GM12878 (cell line): ENCODE measurements at regions of chr3 and their contacts with region 1.

Region 1: DNA sequence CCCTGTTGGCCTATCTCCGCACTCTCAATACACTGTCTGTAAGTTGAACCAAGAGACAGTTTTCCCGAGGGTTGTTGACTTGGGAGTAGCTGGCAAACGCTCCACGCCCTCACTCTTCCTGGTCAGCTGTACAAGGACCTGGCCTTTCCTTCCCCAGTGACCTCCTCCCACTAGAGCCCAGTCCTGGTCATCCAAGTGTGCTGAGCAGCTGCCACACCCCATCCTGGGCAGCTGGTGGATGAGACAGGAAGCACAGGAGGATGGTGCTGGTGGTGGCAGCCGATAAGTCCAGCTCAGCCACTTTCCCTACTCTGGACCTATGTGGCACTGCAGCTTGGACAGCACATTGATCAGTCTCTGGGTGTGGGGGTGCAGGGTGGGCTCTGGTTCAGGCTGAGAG is 19.8 kb downstream of the PFKFB4 start:
- DNase-seq: no peak
- ATAC-seq: no peak
- H3K4me3 ChIP-seq: no peak overlapping the region
- H3K27ac ChIP-seq: no peak overlapping the region
- H3K4me1 ChIP-seq: no peaks in the 10 kb centered on the region
- H3K27me3 ChIP-seq: no peaks in the 10 kb centered on the region
- CTCF ChIP-seq: no peak
- EP300 ChIP-seq: no peak
- POLR2A ChIP-seq: no peak
- RAD21 ChIP-seq: no peak

Region 2: DNA sequence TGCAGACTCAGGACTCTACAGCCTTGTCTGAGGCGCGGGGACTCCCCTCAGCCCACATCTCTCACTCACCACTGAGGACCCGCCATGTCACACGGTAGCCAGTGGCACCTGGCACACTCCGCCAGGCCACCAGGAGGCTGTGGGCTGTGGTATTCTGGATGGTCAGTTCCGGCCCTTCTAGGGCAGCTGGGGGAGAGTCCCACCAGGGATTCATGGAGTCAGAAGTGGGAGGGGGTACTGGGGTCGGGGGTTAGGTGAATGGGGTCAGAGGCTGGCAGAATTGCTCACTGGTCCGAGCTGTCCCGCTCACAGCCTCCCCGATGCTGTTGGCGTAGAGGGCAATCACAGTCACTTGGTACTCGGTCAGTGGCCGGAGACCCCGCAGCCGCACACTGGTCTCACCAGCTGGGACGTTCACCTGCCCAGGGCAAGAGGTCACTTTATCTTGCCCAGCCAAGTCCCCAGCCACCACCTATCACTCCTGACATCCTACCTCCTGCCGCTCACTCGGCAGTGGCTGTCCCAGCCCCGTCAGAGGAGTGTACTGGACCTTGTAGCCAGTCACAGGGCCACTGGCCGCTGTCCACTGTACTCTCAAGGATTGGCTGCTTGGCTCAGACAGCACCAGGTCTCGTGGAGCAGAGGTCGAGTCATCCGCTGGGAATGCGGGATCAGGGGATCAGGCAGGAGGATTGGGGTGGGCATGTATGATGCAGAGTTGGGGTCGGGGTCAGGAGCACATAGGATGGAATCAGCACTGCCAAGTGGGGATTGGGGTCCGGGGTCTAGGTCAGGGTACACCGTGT is 55.7 kb after region 1 on chr3:
- CTCF ChIA-PET with region 1: no interaction called
- POLR2A ChIA-PET with region 1: interaction called, 12 read pairs
- RAD21 ChIA-PET with region 1: no interaction called
- SMC1A ChIA-PET with region 1: no interaction called
- in situ Hi-C with region 1: no loop called
- intact Hi-C with region 1: no loop called
- DNase-seq: no peak
- ATAC-seq: no peak
- H3K4me3 ChIP-seq: no peak overlapping the region
- H3K27ac ChIP-seq: no peak overlapping the region
- H3K4me1 ChIP-seq: no peaks in the 10 kb centered on the region; the same call in 1 of the 2 replicates
- H3K27me3 ChIP-seq: peaks cover 0 to 9% of the 10 kb centered on the region in 2 experiments; a peak in 2 of 4 replicates
- CTCF ChIP-seq: no peak
- EP300 ChIP-seq: no peak
- POLR2A ChIP-seq: no peak
- RAD21 ChIP-seq: no peak